Activated CD4-positive, alpha-beta memory T cell treated with anti-CD3 and anti-CD28 coated beads, Interleukin-2, amount 10 ng/mL, durations not matched to agents 7 days and 5 days (primary cell): ENCODE measurements at regions of chr3 and their contacts with region 1.

Region 1: DNA sequence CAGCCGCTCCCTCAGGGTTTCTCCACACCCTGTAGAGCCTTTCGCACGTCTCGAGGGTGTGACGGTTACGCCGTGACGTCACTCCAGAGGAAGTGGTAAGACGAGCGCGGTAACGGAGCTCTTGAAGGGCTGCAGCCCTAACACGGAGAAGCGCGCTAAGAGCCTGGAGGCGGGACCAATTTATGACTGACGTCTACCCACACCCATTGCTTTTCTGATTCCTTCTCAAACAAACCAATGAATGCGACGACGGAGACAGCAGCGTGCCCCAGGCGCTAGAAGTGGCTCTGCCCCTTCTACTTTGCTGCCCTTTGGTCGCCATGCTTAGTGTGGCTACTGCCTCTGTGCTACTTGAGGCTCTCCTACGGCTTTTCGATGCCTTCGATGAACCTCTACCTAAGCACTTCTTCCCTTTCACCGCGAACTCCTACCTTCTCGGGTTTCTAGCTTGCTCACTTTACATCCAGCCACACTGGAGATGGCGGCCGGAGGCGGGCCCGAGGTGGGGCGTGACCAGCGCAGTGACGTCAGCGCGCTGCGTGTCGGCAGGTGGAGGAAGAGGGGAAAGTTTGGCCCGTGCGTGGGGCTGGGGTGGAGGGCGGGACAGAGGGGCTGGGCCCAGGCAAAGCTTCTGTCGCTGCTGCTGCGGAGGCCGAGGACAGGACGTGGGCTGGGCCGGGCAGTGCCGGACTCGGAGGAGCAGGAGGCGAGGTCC is at the start of gene OXSR1:
- DNase-seq: peak; percentile 99
- H3K4me3 Mint-ChIP-seq: peak within 1 kb of the TSS; percentile 96
- H3K27ac Mint-ChIP-seq: peak within 1 kb of the TSS; percentile 99
- H3K4me1 Mint-ChIP-seq: peaks cover 51% of the 10 kb centered on the region
- H3K27me3 Mint-ChIP-seq: no peaks in the 10 kb centered on the region
- total RNA-seq, gene OXSR1: 67.5 to 71.3 TPM

Region 2: DNA sequence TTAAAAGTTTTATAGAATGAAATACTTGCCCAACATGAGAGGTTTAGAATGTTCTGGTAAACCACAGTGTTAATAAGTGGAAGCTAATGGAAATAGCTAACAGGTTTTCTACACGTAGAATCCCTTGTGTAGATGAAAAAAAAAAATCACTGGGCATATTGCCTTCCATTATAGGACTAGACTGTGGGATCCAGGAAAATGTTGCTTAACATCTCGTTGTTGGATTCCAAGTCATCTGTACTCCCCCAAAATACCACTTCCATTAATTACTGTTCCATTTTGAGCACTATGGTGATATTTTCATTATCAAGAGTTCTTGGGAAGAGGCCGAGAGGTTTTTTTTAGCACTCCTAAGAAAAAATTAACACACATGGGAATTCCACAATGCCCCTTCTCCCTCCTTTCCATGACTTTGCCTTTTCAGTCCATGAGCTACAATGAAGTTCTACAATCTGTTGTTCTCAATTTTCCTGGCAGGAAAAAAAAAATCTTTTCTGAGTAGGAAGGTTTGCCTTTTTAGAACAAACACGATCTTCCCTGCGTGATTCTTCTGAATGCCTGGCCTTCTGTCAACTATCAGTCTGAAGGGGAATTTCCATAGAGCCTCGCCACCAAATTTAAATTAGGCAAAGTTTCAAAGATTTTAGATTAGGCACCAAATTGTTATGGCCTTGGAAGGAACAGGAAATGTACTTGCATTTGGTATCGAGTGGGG is 377.8 kb before region 1 on chr3:
- CTCF ChIA-PET with region 1: no interaction called
- POLR2A ChIA-PET with region 1: no interaction called
- DNase-seq: no peak
- H3K4me3 Mint-ChIP-seq: no peak overlapping the region
- H3K27ac Mint-ChIP-seq: no peak overlapping the region
- H3K4me1 Mint-ChIP-seq: peaks cover 7% of the 10 kb centered on the region
- H3K27me3 Mint-ChIP-seq: peaks cover 5% of the 10 kb centered on the region

Region 3: DNA sequence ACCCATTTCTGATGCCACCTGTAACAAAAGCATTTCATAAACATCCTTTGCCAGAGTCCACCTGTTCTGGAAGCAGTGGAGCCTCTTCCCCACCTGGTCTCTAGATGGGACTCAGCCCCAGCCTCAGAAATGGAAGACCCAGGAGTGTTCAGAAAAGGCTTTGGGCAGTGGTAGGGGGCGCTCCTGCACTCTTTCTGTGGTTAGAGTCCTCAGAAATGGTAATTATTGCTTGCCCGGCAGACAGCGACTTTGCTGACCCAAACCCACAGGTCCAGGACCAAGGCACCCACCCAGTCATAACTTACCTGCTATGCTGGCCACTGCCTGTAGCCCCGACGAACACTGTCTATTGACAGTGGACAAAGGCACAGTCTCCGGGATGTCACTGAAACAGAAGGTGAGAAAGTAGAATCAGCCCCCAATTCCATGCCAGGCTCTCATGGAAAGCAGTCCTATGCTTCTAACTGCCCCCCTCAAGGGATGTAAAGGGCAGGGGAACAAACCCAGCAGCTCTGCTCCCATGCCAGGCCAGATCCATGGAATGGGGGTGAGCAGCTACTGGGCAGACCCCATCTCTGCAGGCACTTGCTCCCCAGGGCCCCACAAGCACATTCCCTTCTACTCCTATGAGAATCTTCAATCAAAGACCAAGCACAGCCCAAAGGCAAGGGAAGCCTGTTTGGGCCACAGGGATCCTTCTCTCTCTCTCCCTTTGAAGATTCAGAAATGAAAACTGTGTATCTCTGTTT is 33.3 kb before region 1 on chr3:
- CTCF ChIA-PET with region 1: interaction called, 37 read pairs
- POLR2A ChIA-PET with region 1: interaction called, 286 read pairs
- DNase-seq: peak; percentile 32
- H3K4me3 Mint-ChIP-seq: no peak overlapping the region
- H3K27ac Mint-ChIP-seq: no peak overlapping the region
- H3K4me1 Mint-ChIP-seq: peaks cover 33% of the 10 kb centered on the region
- H3K27me3 Mint-ChIP-seq: no peaks in the 10 kb centered on the region

Region 4: GRCh38 chr3:38154033-38154494 is 11.1 kb before region 1 on chr3:
- CTCF ChIA-PET with region 1: interaction called, 55 read pairs
- POLR2A ChIA-PET with region 1: interaction called, 116 read pairs
- DNase-seq: no peak
- H3K4me3 Mint-ChIP-seq: no peak overlapping the region
- H3K27ac Mint-ChIP-seq: no peak overlapping the region
- H3K4me1 Mint-ChIP-seq: peaks cover 54% of the 10 kb centered on the region
- H3K27me3 Mint-ChIP-seq: no peaks in the 10 kb centered on the region

Region 5: GRCh38 chr3:38205472-38205805 is 40.3 kb after region 1 on chr3:
- CTCF ChIA-PET with region 1: no interaction called
- POLR2A ChIA-PET with region 1: interaction called, 20 read pairs
- DNase-seq: no peak
- H3K4me3 Mint-ChIP-seq: no peak overlapping the region
- H3K27ac Mint-ChIP-seq: peak overlapping the region; percentile 59
- H3K4me1 Mint-ChIP-seq: peaks cover 69% of the 10 kb centered on the region
- H3K27me3 Mint-ChIP-seq: no peaks in the 10 kb centered on the region

Region 6: GRCh38 chr3:38317155-38317759 is 152.1 kb after region 1 on chr3:
- CTCF ChIA-PET with region 1: no interaction called
- POLR2A ChIA-PET with region 1: no interaction called
- DNase-seq: no peak
- H3K4me3 Mint-ChIP-seq: no peak overlapping the region
- H3K27ac Mint-ChIP-seq: no peak overlapping the region
- H3K4me1 Mint-ChIP-seq: no peaks in the 10 kb centered on the region
- H3K27me3 Mint-ChIP-seq: peaks cover 1% of the 10 kb centered on the region